Psoas muscle (tissue), 8 donors: ENCODE measurements at regions of chr6 and their contacts with region 1.

Region 1: DNA sequence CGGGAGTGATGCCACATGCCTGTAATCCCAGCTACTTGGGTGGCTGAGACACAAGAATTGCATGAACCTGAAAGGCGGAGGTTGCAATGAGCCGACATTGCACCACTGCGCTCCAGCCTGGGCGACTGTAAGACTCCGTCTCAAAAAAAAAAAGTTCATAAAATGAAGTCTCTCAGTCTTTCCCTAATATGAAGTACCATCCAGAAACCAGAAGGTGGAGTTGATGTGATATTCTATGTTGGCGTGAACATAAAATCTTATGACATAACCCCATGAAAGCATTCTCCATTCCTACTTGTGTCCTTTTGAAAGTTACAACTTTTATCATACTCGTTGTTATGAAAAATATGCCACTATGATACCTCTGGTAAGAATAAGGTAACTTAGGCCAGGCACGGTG is 5.7 kb downstream of the SOD2 start:
- DNase-seq: no peak
- ATAC-seq: no peak
- H3K4me3 ChIP-seq: peak overlapping the region; percentile 99
- H3K27ac ChIP-seq: no peak overlapping the region
- H3K4me1 ChIP-seq: peaks cover 67% of the 10 kb centered on the region
- H3K27me3 ChIP-seq: no peaks in the 10 kb centered on the region
- CTCF ChIP-seq: no peak

Region 2: GRCh38 chr6:159529934-159530333 is 157.4 kb before region 1 on chr6:
- intact Hi-C with region 1: no loop called
- DNase-seq: peak in 1 of 2 donors; percentile 61
- ATAC-seq: peak in 1 of 4 donors; percentile 32
- H3K4me3 ChIP-seq: no peak overlapping the region
- H3K27ac ChIP-seq: no peak overlapping the region
- H3K4me1 ChIP-seq: no peaks in the 10 kb centered on the region
- H3K27me3 ChIP-seq: no peaks in the 10 kb centered on the region
- CTCF ChIP-seq: no peak

Region 3: GRCh38 chr6:159608961-159609651 is 78.2 kb before region 1 on chr6:
- intact Hi-C with region 1: no loop called
- DNase-seq: no peak
- ATAC-seq: peak in 3 of 4 donors; percentile 29 to 32 (median 31)
- H3K4me3 ChIP-seq: no peak overlapping the region
- H3K27ac ChIP-seq: no peak overlapping the region
- H3K4me1 ChIP-seq: no peaks in the 10 kb centered on the region
- H3K27me3 ChIP-seq: no peaks in the 10 kb centered on the region
- CTCF ChIP-seq: no peak

Region 4: DNA sequence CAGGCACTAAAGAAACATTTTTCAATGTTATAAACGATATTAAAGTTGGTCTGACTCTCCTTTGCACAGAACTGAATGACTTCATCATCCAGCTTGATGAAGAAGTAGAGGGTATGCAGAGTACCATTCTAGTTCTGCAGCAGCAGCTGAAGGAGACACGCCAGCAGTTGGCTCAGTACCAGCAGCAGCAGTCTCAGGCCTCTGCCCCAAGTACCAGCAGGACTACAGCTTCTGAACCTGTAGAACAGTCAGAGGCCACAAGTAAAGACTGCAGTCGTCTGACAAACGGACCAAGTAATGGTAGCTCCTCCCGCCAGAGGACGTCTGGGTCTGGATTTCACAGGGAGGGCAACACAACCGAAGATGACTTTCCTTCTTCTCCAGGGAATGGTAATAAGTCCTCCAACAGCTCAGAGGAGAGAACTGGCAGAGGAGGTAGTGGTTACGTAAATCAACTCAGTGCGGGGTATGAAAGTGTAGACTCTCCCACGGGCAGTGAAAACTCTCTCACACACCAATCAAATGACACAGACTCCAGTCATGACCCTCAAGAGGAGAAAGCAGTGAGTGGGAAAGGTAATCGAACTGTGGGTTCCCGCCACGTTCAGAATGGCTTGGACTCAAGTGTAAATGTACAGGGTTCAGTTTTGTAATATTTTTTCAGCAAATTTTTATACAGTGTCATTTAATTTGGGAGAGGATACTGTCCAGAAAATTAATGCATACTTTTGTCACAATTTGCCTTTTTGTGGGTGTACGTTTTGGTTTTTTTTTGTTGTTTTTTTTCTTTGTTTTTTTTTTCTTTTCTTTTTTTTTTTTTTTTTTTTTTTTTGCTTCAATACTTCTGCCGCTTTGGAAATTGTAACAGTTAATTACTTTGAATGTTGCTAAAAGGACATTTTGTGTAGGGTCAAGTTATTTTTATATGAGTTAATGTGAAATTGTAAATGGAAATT is 67.9 kb after region 1 on chr6:
- intact Hi-C with region 1: loop called in 1 of 2 experiments (anchors 5 kb)
- DNase-seq: no peak
- ATAC-seq: peak; percentile 23 to 42 (median 35)
- H3K4me3 ChIP-seq: no peak overlapping the region
- H3K27ac ChIP-seq: no peak overlapping the region
- H3K4me1 ChIP-seq: peaks cover 3% of the 10 kb centered on the region
- H3K27me3 ChIP-seq: no peaks in the 10 kb centered on the region
- CTCF ChIP-seq: no peak